ENCODE measurements at regions of chr2 and their contacts with region 1.

Region 1: DNA sequence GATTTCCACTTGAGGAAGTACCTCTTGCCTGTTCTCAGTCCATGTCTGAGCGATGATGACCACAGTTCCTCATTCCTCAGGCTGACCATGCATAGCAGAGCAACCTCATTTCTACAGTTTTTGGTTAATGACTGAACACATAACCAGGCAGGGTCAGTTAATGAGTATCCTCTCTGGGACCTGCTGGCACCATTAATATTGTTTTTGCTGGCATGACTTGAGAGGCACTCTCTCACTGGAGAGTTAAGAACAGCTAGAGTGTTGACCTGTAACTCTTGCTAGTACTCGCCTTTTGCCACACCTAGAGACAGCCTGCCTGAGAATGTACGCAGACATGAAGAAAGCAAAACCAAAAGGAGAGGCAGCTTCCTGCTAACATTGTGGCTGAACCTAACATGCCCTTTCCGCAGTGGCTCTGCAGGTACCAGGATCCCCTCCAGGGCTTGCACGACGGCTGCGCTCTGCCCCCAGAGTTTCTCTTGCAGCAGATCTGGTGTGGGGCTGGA is 23.9 kb downstream of the PECR start:
- DNase-seq: peak; percentile 63
- H3K4me3 Mint-ChIP-seq: peak overlapping the region; percentile 71
- H3K27ac Mint-ChIP-seq: peak overlapping the region; percentile 89
- H3K4me1 Mint-ChIP-seq: peaks cover 33% of the 10 kb centered on the region
- H3K27me3 Mint-ChIP-seq: no peaks in the 10 kb centered on the region

Region 2: DNA sequence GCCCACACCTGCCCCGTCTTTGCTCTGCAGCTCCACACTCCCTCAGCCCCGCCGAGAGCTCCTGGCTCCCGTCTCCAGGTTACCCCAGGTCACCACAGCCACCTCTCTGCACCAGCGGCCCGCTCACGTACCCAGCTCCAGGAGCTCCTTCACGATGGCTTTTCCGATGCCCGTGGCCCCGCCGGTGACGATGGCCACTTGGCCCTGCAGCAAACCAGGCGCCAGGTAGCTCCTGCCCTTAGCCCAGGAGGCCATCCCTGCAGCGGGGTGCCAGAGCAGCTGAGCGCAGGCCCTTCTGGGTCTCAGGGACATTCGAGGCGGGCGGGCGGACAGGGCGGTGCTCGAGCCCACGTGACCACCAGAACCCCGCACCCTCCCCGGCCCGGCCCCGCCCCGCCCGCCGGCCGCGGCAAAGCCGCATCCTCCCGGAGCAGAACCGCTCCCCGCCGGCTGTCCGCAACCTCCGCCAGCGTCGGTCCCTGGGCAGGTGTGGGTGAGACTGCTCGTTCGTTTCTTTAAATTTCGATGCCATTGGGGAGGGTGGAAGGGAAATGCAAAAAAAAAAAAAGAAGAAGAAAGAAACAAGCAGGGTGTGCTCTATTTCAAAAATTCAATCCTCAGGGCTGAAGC is 23.9 kb after region 1 on chr2 and contains the starts of genes PECR and TMEM169:
- CTCF ChIA-PET with region 1: interaction called, 6 read pairs
- POLR2A ChIA-PET with region 1: interaction called, 3 read pairs
- intact Hi-C with region 1: loop called (anchors 2 kb)
- DNase-seq: peak; percentile 87
- H3K4me3 Mint-ChIP-seq: peak within 1 kb of the TSS; percentile 96
- H3K27ac Mint-ChIP-seq: peak within 1 kb of the TSS; percentile 81
- H3K4me1 Mint-ChIP-seq: peaks cover 51% of the 10 kb centered on the region
- H3K27me3 Mint-ChIP-seq: no peaks in the 10 kb centered on the region
- total RNA-seq, gene PECR: 23.3 to 27.6 TPM
- total RNA-seq, gene TMEM169: 2.0 to 2.7 TPM

Region 3: DNA sequence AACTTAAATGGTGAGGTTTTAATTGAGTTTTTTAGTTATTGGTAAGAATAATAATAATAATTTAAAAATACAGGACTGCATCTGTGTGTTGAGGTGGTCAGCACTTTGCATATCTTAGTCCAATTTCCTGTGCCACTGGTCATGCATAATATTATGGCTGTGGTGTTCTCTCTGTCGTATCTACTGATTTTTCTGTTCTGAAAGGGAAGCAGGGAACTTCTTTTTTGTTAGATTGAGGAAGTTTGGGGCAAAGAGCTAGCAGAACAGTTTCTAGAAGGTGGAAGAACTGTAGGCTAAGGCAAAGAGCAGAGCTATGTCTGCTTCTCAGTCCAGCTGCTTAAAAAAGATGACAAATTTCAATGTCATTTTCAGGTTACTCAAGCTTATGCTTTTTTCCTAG is 125.7 kb after region 1 on chr2:
- CTCF ChIA-PET with region 1: no interaction called
- POLR2A ChIA-PET with region 1: no interaction called
- intact Hi-C with region 1: no loop called
- DNase-seq: no peak
- H3K4me3 Mint-ChIP-seq: no peak overlapping the region
- H3K27ac Mint-ChIP-seq: peak overlapping the region; percentile 39
- H3K4me1 Mint-ChIP-seq: peaks cover 68% of the 10 kb centered on the region
- H3K27me3 Mint-ChIP-seq: no peaks in the 10 kb centered on the region

Measured in activated CD4-positive, alpha-beta memory T cell treated with anti-CD3 and anti-CD28 coated beads for 36 hours (primary cell).